CD8-positive, alpha-beta memory T cell (primary cell): ENCODE measurements at regions of chr11 and their contacts with region 1.

Region 1: GRCh38 chr11:125592305-125593112 is at the start of gene STT3A:
- DNase-seq: peak; percentile 95 to 99 (median 98)
- H3K4me3 ChIP-seq: peak within 1 kb of the TSS; percentile 100
- H3K4me3 Mint-ChIP-seq: peak within 1 kb of the TSS; percentile 90 to 98 (median 93)
- H3K27ac ChIP-seq: peak within 1 kb of the TSS; percentile 100
- H3K27ac Mint-ChIP-seq: peak within 1 kb of the TSS; percentile 92 to 99 (median 98)
- H3K4me1 ChIP-seq: peaks cover 20% of the 10 kb centered on the region
- H3K4me1 Mint-ChIP-seq: peaks cover 41 to 54% (median 53%) of the 10 kb centered on the region in 3 donors
- H3K27me3 ChIP-seq: no peaks in the 10 kb centered on the region
- H3K27me3 Mint-ChIP-seq: no peaks in the 10 kb centered on the region
- total RNA-seq, gene STT3A: 140 to 143 TPM

Region 2: GRCh38 chr11:125625630-125626287 is 33.2 kb after region 1 on chr11:
- CTCF ChIA-PET with region 1: interaction called, 13 read pairs
- POLR2A ChIA-PET with region 1: interaction called, 6 read pairs
- DNase-seq: peak; percentile 67 to 85 (median 80)
- H3K4me3 ChIP-seq: peak overlapping the region; percentile 95
- H3K4me3 Mint-ChIP-seq: peak overlapping the region; percentile 92 to 99 (median 96)
- H3K27ac ChIP-seq: peak overlapping the region; percentile 97
- H3K27ac Mint-ChIP-seq: peak overlapping the region; percentile 92 to 99 (median 98)
- H3K4me1 ChIP-seq: peaks cover 13% of the 10 kb centered on the region
- H3K4me1 Mint-ChIP-seq: peaks cover 21 to 29% (median 25%) of the 10 kb centered on the region in 3 donors
- H3K27me3 ChIP-seq: no peaks in the 10 kb centered on the region
- H3K27me3 Mint-ChIP-seq: no peaks in the 10 kb centered on the region

Region 3: GRCh38 chr11:125743681-125744080 is 151.2 kb after region 1 on chr11:
- CTCF ChIA-PET with region 1: no interaction called
- POLR2A ChIA-PET with region 1: no interaction called
- DNase-seq: no peak
- H3K4me3 ChIP-seq: no peak overlapping the region
- H3K4me3 Mint-ChIP-seq: no peak overlapping the region
- H3K27ac ChIP-seq: no peak overlapping the region
- H3K27ac Mint-ChIP-seq: no peak overlapping the region
- H3K4me1 ChIP-seq: no peaks in the 10 kb centered on the region
- H3K4me1 Mint-ChIP-seq: no peaks in the 10 kb centered on the region
- H3K27me3 ChIP-seq: no peaks in the 10 kb centered on the region
- H3K27me3 Mint-ChIP-seq: peaks cover 3 to 4% of the 10 kb centered on the region in 2 donors